ENCODE measurements at regions of chr6 and their contacts with region 1.

Region 1: GRCh38 chr6:11194356-11195218 is 37.9 kb downstream of the NEDD9 start:
- DNase-seq: peak; percentile 91
- H3K4me3 ChIP-seq: peak overlapping the region in 1 of 3 experiments; percentile 9
- H3K27ac ChIP-seq: peak overlapping the region; percentile 98
- H3K4me1 ChIP-seq: peaks cover 37% of the 10 kb centered on the region
- H3K27me3 ChIP-seq: no peaks in the 10 kb centered on the region
- CTCF ChIP-seq: peak in 1 of 2 donors; percentile 9
- POLR2A ChIP-seq: peak; percentile 38

Region 2: DNA sequence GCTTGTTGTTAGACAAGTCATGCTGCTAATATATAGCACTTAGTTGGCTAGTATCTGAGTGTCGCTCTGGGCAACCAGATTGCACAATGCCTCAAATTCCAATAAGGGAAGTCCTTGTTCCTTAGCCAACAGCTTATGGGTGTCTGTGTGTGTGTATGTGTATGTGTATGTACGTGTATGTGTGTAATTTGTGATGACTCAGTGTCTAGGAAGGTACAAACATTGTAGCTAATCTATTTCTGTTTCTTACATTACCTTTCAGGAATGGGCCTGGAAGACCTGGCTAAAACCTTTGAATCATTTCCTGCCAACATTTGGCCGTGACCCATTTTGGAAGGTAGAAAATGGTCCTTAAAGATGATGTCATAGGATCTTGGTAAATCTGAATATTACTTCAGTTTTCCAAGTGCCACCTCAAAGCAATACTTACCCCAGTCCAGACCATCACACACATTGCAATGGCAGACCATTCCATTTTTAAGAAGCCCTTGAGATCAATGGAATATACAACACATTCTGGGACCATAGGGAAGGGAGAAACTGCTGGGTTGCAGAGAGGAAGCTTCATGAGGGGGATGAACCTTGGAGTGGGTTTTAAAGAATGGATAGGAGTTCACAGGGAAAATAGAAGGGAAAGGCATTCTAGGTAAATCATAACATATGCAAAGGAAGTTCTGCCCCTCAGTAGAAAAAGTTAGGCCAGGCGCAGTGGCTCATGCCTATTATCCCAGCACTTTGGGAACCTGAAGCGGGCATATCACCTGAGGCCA is 12.8 kb after region 1 on chr6:
- CTCF ChIA-PET with region 1: interaction called, 6 read pairs
- POLR2A ChIA-PET with region 1: no interaction called
- dilution Hi-C with region 1: no loop called
- intact Hi-C with region 1: loop called (anchors 1 kb)
- DNase-seq: peak; percentile 96
- H3K4me3 ChIP-seq: no peak overlapping the region
- H3K27ac ChIP-seq: peak overlapping the region; percentile 95
- H3K4me1 ChIP-seq: peaks cover 69% of the 10 kb centered on the region
- H3K27me3 ChIP-seq: no peaks in the 10 kb centered on the region
- CTCF ChIP-seq: no peak
- POLR2A ChIP-seq: peak; percentile 43

Measured in endothelial cell of umbilical vein (primary cell).